Activated CD4-positive, alpha-beta T cell treated with anti-CD3 and anti-CD28 coated beads for 36 hours (primary cell): ENCODE measurements at regions of chr2 and their contacts with region 1.

Region 1: GRCh38 chr2:227890495-227891079 is 19.2 kb downstream of the DAW1 start:
- DNase-seq: no peak
- ATAC-seq: no peak
- H3K4me3 Mint-ChIP-seq: no peak overlapping the region
- H3K27ac Mint-ChIP-seq: no peak overlapping the region
- H3K4me1 Mint-ChIP-seq: no peaks in the 10 kb centered on the region
- H3K27me3 Mint-ChIP-seq: peaks cover 9% of the 10 kb centered on the region

Region 2: GRCh38 chr2:227877421-227878310 is 12.9 kb before region 1 on chr2:
- CTCF ChIA-PET with region 1: interaction called, 16 read pairs
- POLR2A ChIA-PET with region 1: no interaction called
- intact Hi-C with region 1: no loop called
- DNase-seq: no peak
- ATAC-seq: no peak
- H3K4me3 Mint-ChIP-seq: no peak overlapping the region
- H3K27ac Mint-ChIP-seq: no peak overlapping the region
- H3K4me1 Mint-ChIP-seq: no peaks in the 10 kb centered on the region
- H3K27me3 Mint-ChIP-seq: peaks cover 27% of the 10 kb centered on the region

Region 3: DNA sequence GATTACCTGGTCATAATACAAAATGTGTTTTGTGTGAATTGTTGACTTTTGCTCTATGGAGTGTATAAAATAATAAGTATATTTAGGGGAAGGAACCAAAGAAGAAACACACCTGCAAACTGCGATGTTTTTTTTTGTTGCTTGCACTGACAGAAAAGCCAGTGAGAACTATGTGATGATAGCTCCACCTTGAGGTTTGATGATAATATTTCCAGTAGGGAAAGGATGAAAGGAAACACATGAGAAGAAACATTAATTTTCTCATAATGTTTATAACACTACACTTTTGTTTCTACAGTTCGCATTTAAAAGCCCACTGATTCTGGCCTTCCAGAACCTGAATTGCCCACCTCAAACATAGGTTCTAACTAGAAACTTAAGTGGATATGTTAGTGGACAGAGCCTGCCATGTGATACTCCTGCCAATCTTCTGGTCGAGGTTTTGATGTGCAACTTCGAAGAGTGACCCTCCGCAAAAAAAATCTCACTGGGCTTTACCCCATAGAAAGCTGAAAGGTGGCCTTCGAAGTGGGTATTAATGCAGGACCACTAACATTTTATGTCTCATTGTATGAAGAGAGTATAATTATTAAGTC is 767.3 kb after region 1 on chr2:
- CTCF ChIA-PET with region 1: no interaction called
- POLR2A ChIA-PET with region 1: no interaction called
- intact Hi-C with region 1: loop called in 1 of 2 experiments (anchors 2 kb)
- DNase-seq: no peak
- ATAC-seq: no peak
- H3K4me3 Mint-ChIP-seq: no peak overlapping the region
- H3K27ac Mint-ChIP-seq: no peak overlapping the region
- H3K4me1 Mint-ChIP-seq: no peaks in the 10 kb centered on the region
- H3K27me3 Mint-ChIP-seq: no peaks in the 10 kb centered on the region

Region 4: GRCh38 chr2:229273723-229274338 is 1383.2 kb after region 1 on chr2:
- CTCF ChIA-PET with region 1: interaction called, 13 read pairs
- POLR2A ChIA-PET with region 1: no interaction called
- intact Hi-C with region 1: loop called in 1 of 2 experiments (anchors 2 kb)
- DNase-seq: no peak
- ATAC-seq: no peak
- H3K4me3 Mint-ChIP-seq: no peak overlapping the region
- H3K27ac Mint-ChIP-seq: no peak overlapping the region
- H3K4me1 Mint-ChIP-seq: no peaks in the 10 kb centered on the region
- H3K27me3 Mint-ChIP-seq: peaks cover 21% of the 10 kb centered on the region

Region 5: DNA sequence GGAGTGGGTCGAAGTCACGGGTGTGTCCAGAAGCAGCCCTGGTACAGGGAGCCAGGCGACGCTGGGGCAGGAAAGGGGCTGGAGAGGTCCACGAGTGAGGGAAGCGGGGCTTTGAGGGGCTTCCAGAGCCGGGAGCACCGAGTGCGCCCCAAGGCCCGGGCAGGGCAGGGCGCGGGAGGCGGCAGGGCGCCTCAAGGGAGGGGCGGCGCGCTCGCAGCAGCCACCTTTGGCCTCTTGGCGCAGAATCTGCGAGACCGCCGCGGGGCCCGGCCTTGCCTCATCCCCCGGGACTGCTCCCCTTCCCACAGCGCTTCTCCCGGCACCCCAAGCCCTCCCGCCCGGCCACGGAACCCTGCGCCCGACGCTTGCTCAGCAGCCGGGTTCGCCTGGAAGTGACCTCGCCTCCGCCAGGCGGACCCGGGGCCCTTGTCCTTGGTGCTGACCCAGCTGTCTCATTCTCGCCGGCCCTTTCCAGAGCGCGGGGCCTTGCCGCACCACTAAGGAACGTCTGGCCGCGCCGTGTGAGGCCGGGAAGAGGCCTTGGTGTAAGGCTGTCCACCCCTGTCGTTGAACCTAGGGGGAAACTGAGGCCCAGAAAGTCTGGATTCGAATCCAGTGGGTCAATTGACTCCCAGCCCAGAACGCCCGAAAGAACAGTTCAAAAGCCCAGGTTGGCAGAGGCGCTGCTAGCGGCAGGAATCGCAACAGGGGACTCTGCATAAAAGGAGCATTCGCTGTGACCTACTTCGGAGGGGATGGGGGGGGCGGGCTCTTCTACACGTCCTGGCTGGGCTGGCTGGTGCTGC is 1824.4 kb after region 1 on chr2:
- CTCF ChIA-PET with region 1: no interaction called
- POLR2A ChIA-PET with region 1: no interaction called
- intact Hi-C with region 1: loop called in 1 of 2 experiments (anchors 10 kb)
- DNase-seq: peak; percentile 63
- ATAC-seq: peak; percentile 58
- H3K4me3 Mint-ChIP-seq: peak overlapping the region; percentile 13
- H3K27ac Mint-ChIP-seq: no peak overlapping the region
- H3K4me1 Mint-ChIP-seq: peaks cover 11% of the 10 kb centered on the region
- H3K27me3 Mint-ChIP-seq: peaks cover 60% of the 10 kb centered on the region